BJ (cell line): ENCODE measurements at regions of chr9 and their contacts with region 1.

Region 1: DNA sequence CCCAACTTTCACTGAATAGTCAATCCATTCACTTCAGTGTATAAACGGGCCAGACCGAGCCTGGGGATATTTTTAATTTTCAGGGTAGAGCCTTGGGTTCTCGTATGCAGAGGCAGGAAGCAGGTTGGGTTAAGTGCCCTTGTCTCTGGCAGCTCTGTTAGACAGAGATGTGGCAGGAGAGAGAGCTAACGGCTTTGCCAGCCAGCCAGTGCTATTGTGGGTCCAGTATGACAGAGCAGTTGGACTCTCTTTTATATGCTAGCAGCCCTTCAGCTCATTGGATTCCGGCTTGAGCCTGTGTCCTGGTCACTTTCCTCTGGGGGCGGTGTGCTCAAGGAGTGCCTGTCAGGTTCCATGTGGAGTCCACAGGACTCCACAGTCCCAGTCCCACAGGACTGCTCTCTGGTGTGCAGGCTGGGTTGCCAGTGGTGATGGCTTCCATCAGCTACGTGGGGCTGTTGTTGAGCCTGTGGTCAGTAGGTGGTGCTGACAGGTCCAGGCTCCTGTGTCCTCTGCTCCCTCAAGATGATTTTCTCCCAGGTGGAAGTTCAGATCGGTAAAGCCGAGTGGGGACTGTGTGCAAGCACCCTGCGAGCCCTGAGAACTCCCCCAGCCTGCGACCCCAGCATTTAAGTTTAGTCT is 14.3 kb downstream of the CLTA start:
- DNase-seq: no peak
- H3K4me3 ChIP-seq: no peak overlapping the region
- H3K27me3 ChIP-seq: no peaks in the 10 kb centered on the region
- CTCF ChIP-seq: peak; percentile 24; the same call in 1 of the 2 replicates

Region 2: GRCh38 chr9:36126016-36126730 is 78.9 kb before region 1 on chr9:
- CTCF ChIA-PET with region 1: no interaction called
- POLR2A ChIA-PET with region 1: no interaction called
- DNase-seq: no peak
- H3K4me3 ChIP-seq: no peak overlapping the region
- H3K27me3 ChIP-seq: no peaks in the 10 kb centered on the region
- CTCF ChIP-seq: no peak

Region 3: DNA sequence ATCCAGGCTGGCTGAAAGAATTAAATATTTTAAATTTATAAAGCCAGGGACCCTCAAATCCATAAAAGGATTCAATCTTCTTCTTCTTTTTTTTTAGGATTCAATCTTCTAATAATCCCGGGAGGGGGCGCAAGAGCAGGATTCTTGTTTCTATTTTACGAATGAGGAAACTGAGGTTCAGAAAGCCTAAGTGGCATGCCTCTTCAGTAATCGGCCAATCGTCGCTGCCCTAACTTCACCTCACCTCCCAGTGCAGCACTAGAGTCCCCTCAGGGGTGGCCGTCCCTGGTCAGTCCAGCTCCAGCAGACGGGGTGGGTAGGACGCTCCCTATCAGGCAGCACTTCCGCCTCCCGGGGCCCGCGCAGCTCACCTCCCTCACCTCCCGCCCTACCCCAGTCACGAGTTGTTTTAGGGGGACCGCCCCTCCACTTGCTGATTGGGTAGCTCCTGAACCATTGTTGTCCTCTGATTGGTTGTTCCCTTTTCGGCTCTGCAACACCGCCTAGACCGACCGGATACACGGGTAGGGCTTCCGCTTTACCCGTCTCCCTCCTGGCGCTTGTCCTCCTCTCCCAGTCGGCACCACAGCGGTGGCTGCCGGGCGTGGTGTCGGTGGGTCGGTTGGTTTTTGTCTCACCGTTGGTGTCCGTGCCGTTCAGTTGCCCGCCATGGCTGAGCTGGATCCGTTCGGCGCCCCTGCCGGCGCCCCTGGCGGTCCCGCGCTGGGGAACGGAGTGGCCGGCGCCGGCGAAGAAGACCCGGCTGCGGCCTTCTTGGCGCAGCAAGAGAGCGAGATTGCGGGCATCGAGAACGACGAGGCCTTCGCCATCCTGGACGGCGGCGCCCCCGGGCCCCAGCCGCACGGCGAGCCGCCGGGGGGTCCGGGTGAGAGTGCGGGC is 14.4 kb before region 1 on chr9 and contains the start of gene CLTA:
- CTCF ChIA-PET with region 1: interaction called, 27 read pairs
- POLR2A ChIA-PET with region 1: no interaction called
- DNase-seq: peak; percentile 94
- H3K4me3 ChIP-seq: peak within 1 kb of the TSS; percentile 76
- H3K27me3 ChIP-seq: no peaks in the 10 kb centered on the region
- CTCF ChIP-seq: peak; percentile 66
- polyA plus RNA-seq, gene CLTA: 197 and 212 TPM in 2 replicates